Dendritic cell treated with granulocyte-macrophage colony-stimulating factor and Interleukin-4, amounts not matched to agents 40 ng/mL and 50 ng/mL, for 4 days (primary cell): ENCODE measurements at regions of chr12 and their contacts with region 1.

Region 1: DNA sequence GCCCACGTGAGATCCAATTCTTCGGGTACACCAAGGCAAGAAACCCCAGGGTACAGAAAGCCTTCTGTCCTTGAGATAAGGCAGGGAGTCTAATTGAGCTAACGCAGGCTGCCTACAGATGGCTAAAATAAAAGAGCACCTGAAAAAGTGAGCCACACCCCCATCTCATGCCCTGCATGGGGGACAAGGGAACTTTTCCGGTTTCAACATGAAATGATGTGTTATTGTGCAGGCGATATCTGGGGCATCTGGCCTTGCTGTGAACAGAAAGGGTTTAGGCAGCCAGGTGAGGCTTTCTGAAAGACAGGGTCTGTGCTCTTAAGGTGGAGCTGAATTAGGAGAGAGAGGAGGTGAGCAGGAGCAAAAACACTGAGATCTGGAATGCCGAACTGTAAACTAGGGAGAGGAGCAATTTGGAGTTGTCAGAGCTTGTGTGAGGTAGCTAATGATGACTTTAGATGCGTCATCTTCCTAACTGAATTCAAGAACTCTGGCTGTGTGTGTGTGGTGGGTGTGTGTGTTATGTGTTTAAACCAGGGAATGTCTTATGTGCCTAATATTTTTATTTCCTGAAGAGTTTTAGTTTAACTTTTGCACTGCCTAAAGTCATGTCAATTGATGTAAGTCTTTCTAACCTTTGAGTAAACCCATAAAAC is 20.1 kb upstream of the LDHB start:
- H3K4me3 Mint-ChIP-seq: no peak overlapping the region
- H3K27ac Mint-ChIP-seq: no peak overlapping the region
- H3K4me1 Mint-ChIP-seq: no peaks in the 10 kb centered on the region
- H3K27me3 Mint-ChIP-seq: no peaks in the 10 kb centered on the region

Region 2: DNA sequence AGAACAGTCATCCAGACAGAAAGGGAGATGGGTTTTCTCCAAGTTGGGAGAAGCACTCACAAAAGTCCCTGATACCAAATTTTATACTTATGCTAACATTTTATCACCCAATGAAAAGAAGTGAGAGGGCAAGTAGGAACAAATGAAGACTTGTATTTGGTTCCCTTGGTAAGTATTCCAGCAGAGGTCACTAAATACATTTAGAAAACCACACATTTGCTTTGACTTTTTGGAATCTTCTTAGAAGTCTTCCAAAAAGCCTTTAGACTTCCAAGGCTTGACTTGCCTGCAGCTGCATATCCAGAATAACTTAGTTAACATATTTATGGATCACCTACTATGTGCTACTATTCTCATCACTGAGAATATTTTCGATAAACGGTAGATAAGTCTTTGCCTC is 70.0 kb before region 1 on chr12:
- intact Hi-C with region 1: loop called (anchors 1 kb)
- H3K4me3 Mint-ChIP-seq: no peak overlapping the region
- H3K27ac Mint-ChIP-seq: no peak overlapping the region
- H3K4me1 Mint-ChIP-seq: no peaks in the 10 kb centered on the region
- H3K27me3 Mint-ChIP-seq: no peaks in the 10 kb centered on the region

Region 3: DNA sequence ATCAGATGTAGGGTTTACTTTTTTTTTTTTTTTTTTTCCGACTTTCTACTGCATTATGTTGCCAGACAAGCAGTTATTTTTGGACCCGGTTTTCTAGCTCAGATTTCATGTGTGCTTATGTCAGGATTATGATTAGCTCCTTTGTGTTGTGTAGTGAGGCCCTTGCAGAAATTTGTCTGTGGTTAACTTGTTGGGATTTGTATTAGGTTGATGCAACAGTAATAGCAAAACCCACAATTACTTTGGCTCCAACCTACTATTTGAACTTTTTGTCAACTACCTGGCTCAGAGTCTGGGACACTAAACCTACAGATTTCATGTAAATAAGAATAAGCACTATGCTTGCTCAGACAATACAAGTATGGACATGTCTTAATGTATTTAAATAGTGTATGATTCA is 140.9 kb after region 1 on chr12:
- intact Hi-C with region 1: no loop called
- H3K4me3 Mint-ChIP-seq: no peak overlapping the region
- H3K27ac Mint-ChIP-seq: no peak overlapping the region
- H3K4me1 Mint-ChIP-seq: no peaks in the 10 kb centered on the region
- H3K27me3 Mint-ChIP-seq: no peaks in the 10 kb centered on the region